Ovary (tissue), 10 donors: ENCODE measurements at regions of chr1 and their contacts with region 1.

Region 1: GRCh38 chr1:70659891-70660290 is 248.8 kb downstream of the CTH start:
- DNase-seq: no peak
- H3K4me3 ChIP-seq: no peak overlapping the region
- H3K27ac ChIP-seq: no peak overlapping the region
- H3K4me1 ChIP-seq: no peaks in the 10 kb centered on the region
- H3K27me3 ChIP-seq: no peaks in the 10 kb centered on the region
- CTCF ChIP-seq: no peak
- EP300 ChIP-seq: no peak
- POLR2A ChIP-seq: no peak

Region 2: DNA sequence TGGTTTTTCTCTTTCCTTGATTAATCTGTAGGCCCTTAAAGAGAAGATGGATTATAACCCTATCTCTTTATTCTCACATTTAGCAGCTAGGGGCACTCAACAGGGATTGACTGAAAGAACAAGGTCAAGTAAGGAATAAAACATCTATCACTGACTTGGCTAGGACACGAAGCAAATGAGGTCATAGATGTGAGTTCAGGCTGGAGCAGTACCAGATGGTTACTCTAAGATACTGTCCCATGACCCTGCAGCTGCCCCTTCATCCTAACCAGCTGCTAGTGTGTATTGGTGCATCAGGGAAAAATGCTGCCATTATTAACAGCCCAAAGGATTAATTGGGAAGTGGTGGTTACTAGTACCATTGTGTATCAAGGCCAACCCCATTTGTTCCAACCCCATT is 26.9 kb before region 1 on chr1:
- intact Hi-C with region 1: no loop called
- DNase-seq: no peak
- H3K4me3 ChIP-seq: no peak overlapping the region
- H3K27ac ChIP-seq: no peak overlapping the region
- H3K4me1 ChIP-seq: no peaks in the 10 kb centered on the region
- H3K27me3 ChIP-seq: no peaks in the 10 kb centered on the region
- CTCF ChIP-seq: no peak
- EP300 ChIP-seq: no peak
- POLR2A ChIP-seq: no peak

Region 3: GRCh38 chr1:71792264-71792663 is 1132.4 kb after region 1 on chr1:
- intact Hi-C with region 1: loop called in 1 of 4 experiments (anchors 5 kb)
- DNase-seq: no peak
- H3K4me3 ChIP-seq: no peak overlapping the region
- H3K27ac ChIP-seq: no peak overlapping the region
- H3K4me1 ChIP-seq: no peaks in the 10 kb centered on the region
- H3K27me3 ChIP-seq: no peaks in the 10 kb centered on the region
- CTCF ChIP-seq: no peak
- EP300 ChIP-seq: no peak
- POLR2A ChIP-seq: no peak